Body of pancreas (tissue), 4 donors: ENCODE measurements at regions of chr17 and their contacts with region 1.

Region 1: DNA sequence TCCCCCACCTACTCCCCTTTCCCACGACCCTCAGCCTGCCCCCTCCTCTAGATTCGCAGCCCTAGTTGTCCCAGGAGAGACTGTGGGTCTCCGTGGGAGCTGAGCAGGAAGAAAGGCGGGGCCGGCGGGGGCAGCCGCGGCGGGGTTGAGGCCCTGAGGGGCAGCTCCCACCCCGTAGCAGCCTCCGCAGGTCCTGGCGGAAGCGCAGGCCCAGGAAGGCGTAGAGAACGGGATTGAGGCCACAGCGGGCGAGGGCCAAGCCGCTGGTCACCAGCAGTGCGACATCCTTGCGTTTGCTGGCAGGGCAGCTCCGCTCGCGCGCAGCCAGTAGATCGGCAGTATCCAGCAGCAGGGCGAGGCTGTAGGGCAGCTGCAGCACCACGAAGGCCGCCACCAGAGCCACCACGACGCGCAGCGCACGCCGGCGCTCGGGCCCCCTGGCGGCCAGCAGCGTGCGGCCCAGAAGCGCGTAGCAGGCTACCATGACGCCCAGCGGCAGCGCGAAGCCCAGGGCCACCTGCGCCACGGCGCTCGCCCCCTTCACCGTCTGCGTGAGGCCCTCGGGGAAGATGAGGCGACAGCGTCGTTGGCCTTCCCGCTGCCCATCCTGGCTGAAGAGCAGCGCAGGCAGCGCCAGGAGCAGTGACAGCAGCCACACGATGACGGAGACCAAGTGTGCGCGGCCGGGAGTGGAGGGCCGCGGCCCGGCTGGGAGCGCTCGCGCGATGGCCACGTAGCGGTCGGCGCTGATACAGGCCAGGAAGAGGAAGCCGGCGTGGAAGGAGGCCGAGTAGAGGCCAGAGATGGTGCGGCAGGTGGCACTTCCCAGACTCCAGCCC is 1.9 kb downstream of the CCR10 start:
- DNase-seq: peak; percentile 83 to 86 (median 85)
- ATAC-seq: peak; percentile 23
- H3K4me3 ChIP-seq: no peak overlapping the region
- H3K27ac ChIP-seq: peak overlapping the region; percentile 86 to 97 (median 90)
- H3K4me1 ChIP-seq: peaks cover 59% of the 10 kb centered on the region
- H3K27me3 ChIP-seq: no peaks in the 10 kb centered on the region
- CTCF ChIP-seq: peak; percentile 83 to 98 (median 90)
- POLR2A ChIP-seq: peak; percentile 31 to 57 (median 50)

Region 2: DNA sequence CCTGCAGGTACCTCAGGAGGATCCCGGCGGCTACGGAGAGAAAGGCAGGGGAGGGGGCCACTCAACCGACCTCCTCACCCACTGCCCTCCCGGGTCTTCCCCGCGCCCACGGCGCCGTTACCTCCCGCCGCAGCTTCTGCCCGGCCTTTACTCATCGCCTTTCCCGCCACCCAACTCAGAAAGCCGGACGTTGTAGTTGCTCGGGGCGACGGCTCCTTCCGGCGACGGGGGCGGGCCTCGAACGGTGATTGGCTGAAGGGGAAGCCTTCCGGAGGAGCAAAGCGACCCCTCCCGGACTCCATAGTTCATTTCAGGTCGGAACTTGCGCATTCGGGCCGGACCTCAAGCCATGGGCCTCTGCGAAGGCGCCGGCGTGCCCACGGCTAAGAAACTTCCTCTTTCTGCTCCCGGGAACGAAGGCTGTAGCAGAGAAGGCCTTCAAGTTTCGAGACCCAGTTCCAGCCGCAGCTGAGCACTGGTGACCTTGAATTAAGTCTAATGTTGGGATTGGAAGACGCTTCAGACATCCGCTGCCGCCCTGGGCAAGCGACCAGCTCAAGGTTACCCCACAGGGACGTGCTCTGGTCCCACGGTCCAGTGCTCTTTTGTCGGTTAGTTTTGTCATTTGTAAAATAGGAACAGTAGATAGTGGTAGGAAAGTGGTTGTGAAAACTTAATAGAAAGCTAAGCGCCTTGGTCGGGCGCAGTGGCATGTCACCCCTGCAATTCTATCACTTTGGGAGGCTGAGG is 102.0 kb before region 1 on chr17 and contains the start of gene PSMC3IP:
- intact Hi-C with region 1: loop called (anchors 5 kb)
- DNase-seq: peak; percentile 95 to 96 (median 95)
- ATAC-seq: peak; percentile 96
- H3K4me3 ChIP-seq: peak within 1 kb of the TSS; percentile 38 to 43
- H3K27ac ChIP-seq: peak within 1 kb of the TSS; percentile 63 to 92 (median 78)
- H3K4me1 ChIP-seq: peaks cover 22% of the 10 kb centered on the region
- H3K27me3 ChIP-seq: no peaks in the 10 kb centered on the region
- CTCF ChIP-seq: peak in 4 of 7 experiments; percentile 26 to 49 (median 42)
- POLR2A ChIP-seq: peak in 2 of 3 donors; percentile 76 to 79
- total RNA-seq, gene PSMC3IP: 2.1 TPM in 1 of 2 donors, not detected in the other

Region 3: GRCh38 chr17:42618442-42619150 is 61.1 kb before region 1 on chr17:
- intact Hi-C with region 1: loop called (anchors 5 kb)
- DNase-seq: peak; percentile 86 to 94 (median 92)
- ATAC-seq: peak; percentile 95
- H3K4me3 ChIP-seq: no peak overlapping the region
- H3K27ac ChIP-seq: peak overlapping the region; percentile 73 to 86 (median 78)
- H3K4me1 ChIP-seq: peaks cover 62% of the 10 kb centered on the region
- H3K27me3 ChIP-seq: no peaks in the 10 kb centered on the region
- CTCF ChIP-seq: peak in 5 of 7 experiments; percentile 37 to 70 (median 66)
- POLR2A ChIP-seq: peak in 2 of 3 donors; percentile 20 to 38

Region 4: DNA sequence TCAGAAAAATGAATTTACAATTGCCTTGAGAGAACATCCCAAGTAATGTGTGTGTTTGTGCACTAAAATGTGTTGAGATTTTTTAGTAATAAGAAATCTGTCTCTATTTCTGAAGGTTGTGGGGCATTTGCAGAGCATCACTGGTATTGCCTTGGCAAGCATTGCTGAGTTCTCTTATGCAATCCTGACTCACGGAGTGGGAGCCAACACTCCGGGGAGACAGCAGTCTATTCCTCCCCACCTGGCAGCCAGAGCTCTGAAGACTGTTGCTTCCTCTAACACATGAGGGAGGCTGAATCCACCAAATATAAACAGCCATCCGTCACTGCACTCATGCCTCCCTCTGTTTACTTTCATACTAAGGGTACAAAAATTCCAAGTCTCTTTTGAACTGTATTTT is 129.5 kb after region 1 on chr17:
- intact Hi-C with region 1: no loop called
- DNase-seq: peak in 3 of 4 donors; percentile 45 to 58 (median 47)
- ATAC-seq: no peak
- H3K4me3 ChIP-seq: no peak overlapping the region
- H3K27ac ChIP-seq: peak overlapping the region in 2 of 4 donors; percentile 48 to 59
- H3K4me1 ChIP-seq: peaks cover 24% of the 10 kb centered on the region
- H3K27me3 ChIP-seq: no peaks in the 10 kb centered on the region
- CTCF ChIP-seq: no peak
- POLR2A ChIP-seq: no peak